CD4-positive, alpha-beta T cell (primary cell): ENCODE measurements at regions of chr4 and their contacts with region 1.

Region 1: DNA sequence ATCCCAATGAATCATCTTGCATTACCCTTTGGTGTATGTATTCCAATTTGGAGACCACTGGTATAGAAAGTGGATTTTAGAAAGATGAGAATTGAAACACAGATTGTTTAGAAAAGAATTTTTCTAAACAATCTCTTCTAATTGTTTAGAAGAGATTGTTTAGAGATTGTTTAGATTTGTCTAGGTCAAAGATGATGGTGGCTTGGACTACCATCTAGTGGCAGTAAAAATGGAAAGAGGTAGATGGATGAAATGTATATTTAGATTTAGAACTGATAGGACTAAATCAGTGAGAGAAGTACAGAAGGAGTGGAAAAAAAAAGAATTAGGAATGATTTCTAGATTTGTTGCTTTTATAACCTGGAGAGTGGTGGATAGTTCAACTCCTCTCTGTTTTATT is 70.6 kb downstream of the ARSJ start:
- DNase-seq: peak in 3 of 14 experiments; percentile 49 to 53 (median 51)
- ATAC-seq: peak; percentile 39
- H3K4me3 ChIP-seq: no peak overlapping the region
- H3K4me3 Mint-ChIP-seq: no peak overlapping the region
- H3K27ac ChIP-seq: no peak overlapping the region
- H3K27ac Mint-ChIP-seq: no peak overlapping the region
- H3K4me1 ChIP-seq: peaks cover 14% of the 10 kb centered on the region
- H3K4me1 Mint-ChIP-seq: peaks cover 33% of the 10 kb centered on the region
- H3K27me3 ChIP-seq: no peaks in the 10 kb centered on the region
- H3K27me3 Mint-ChIP-seq: no peaks in the 10 kb centered on the region
- CTCF ChIP-seq: peak; percentile 65

Region 2: DNA sequence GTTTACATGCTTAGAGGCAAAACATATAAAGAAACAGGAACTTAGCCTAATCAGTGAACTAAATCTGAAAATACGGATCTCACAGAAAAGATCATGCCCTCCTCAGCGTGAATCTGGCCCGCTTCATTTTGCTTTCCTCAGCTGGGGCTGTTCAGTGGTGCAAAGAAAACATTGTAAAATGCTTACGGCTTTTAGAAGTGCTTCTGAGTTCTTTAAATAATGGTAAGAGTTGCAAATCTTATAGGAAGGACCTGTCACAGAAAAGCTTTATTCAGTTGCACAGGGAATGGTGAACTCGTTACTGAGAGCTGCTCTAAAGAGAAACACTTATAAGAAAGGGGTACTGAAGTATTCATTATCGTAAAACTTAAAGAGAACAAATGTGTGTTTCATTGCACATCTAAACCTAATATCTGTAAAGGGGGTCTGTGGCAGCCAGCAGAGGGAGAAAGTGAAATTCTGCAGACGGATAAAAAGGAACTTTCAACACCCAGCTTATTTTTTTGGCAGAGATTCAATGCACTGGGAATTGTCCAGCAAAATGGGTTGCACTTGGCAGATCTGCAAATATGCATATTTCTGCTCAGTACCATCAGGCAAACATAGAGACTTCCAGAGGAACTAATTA is 998.6 kb before region 1 on chr4:
- CTCF ChIA-PET with region 1: no interaction called
- POLR2A ChIA-PET with region 1: no interaction called
- intact Hi-C with region 1: no loop called
- DNase-seq: no peak
- ATAC-seq: no peak
- H3K4me3 ChIP-seq: no peak overlapping the region
- H3K4me3 Mint-ChIP-seq: no peak overlapping the region
- H3K27ac ChIP-seq: no peak overlapping the region
- H3K27ac Mint-ChIP-seq: no peak overlapping the region
- H3K4me1 ChIP-seq: no peaks in the 10 kb centered on the region
- H3K4me1 Mint-ChIP-seq: peaks cover 6% of the 10 kb centered on the region
- H3K27me3 ChIP-seq: no peaks in the 10 kb centered on the region
- H3K27me3 Mint-ChIP-seq: peaks cover 10% of the 10 kb centered on the region
- CTCF ChIP-seq: no peak

Region 3: DNA sequence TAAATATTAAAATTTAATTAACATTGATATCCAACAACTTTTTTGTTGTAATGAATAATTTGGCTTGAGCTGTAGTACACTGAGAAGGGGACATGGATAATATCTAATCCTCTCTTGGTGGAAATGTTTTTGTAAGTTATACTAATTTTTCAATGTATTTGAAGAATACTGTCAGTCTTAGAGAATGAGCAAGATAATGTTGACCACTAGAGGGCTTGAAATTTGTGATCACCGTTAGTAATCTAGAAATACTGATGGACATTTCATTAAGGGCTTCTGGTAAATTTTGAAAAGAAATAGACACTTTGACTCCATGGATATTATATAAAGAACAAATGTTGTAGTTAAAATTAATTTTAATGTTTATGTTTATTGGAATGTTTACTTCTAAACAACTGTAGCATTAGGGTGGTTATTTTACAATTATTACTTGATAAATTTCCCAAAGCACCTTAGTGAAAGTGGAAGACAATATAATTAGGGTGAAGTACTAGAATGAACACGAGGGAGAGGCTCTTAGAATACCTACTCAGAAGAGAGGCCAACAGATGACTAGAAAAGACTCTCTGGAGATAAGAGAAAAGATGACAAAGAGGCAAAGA is 127.3 kb before region 1 on chr4:
- CTCF ChIA-PET with region 1: no interaction called
- POLR2A ChIA-PET with region 1: no interaction called
- intact Hi-C with region 1: loop called in 1 of 2 experiments (anchors 5 kb)
- DNase-seq: peak in 3 of 14 experiments; percentile 45 to 64 (median 64)
- ATAC-seq: peak; percentile 21
- H3K4me3 ChIP-seq: no peak overlapping the region
- H3K4me3 Mint-ChIP-seq: no peak overlapping the region
- H3K27ac ChIP-seq: no peak overlapping the region
- H3K27ac Mint-ChIP-seq: no peak overlapping the region
- H3K4me1 ChIP-seq: no peaks in the 10 kb centered on the region
- H3K4me1 Mint-ChIP-seq: peaks cover 15% of the 10 kb centered on the region
- H3K27me3 ChIP-seq: no peaks in the 10 kb centered on the region
- H3K27me3 Mint-ChIP-seq: no peaks in the 10 kb centered on the region
- CTCF ChIP-seq: peak; percentile 80

Region 4: DNA sequence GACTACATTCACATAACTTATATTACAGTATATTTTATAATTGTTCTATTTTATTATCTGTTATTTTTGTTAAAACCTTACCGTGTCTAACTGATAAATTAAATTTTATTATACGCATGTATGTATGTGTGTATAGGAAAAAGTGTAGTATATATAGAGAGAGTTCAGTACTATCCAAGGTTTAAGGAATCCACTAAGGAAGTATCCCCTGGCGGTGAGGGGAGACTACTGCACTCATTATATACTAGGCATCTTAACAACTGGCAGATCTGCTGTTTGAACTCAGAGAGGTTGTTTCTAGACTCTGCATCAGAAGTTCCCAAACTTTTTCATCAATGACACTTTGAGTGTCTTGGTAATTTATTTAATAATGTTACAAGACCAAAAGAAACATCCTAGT is 1133.7 kb after region 1 on chr4:
- CTCF ChIA-PET with region 1: no interaction called
- POLR2A ChIA-PET with region 1: no interaction called
- intact Hi-C with region 1: no loop called
- DNase-seq: no peak
- ATAC-seq: no peak
- H3K4me3 ChIP-seq: no peak overlapping the region
- H3K4me3 Mint-ChIP-seq: no peak overlapping the region
- H3K27ac ChIP-seq: no peak overlapping the region
- H3K27ac Mint-ChIP-seq: no peak overlapping the region
- H3K4me1 ChIP-seq: no peaks in the 10 kb centered on the region
- H3K4me1 Mint-ChIP-seq: no peaks in the 10 kb centered on the region
- H3K27me3 ChIP-seq: no peaks in the 10 kb centered on the region
- H3K27me3 Mint-ChIP-seq: no peaks in the 10 kb centered on the region
- CTCF ChIP-seq: no peak